Naive thymus-derived CD4-positive, alpha-beta T cell (primary cell): ENCODE measurements at regions of chr9 and their contacts with region 1.

Region 1: GRCh38 chr9:20558566-20559016 is 63.7 kb downstream of the MLLT3 start:
- DNase-seq: peak in 1 of 9 donors; percentile 23
- ATAC-seq: no peak
- H3K4me3 ChIP-seq: no peak overlapping the region
- H3K4me3 Mint-ChIP-seq: peak overlapping the region in 8 of 10 donors; percentile 13 to 69 (median 38)
- H3K27ac ChIP-seq: no peak overlapping the region
- H3K27ac Mint-ChIP-seq: peak overlapping the region in 6 of 9 donors; percentile 54 to 81 (median 66)
- H3K4me1 ChIP-seq: peaks cover 22 to 50% of the 10 kb centered on the region in 2 donors
- H3K4me1 Mint-ChIP-seq: peaks cover 51 to 95% (median 92%) of the 10 kb centered on the region in 7 donors
- H3K27me3 ChIP-seq: no peaks in the 10 kb centered on the region
- H3K27me3 Mint-ChIP-seq: no peaks in the 10 kb centered on the region

Region 2: GRCh38 chr9:20524776-20525175 is 33.8 kb before region 1 on chr9:
- CTCF ChIA-PET with region 1: interaction called, 5 read pairs
- POLR2A ChIA-PET with region 1: no interaction called
- intact Hi-C with region 1: loop called in 1 of 2 experiments (anchors 5 kb)
- DNase-seq: no peak
- ATAC-seq: no peak
- H3K4me3 ChIP-seq: no peak overlapping the region
- H3K4me3 Mint-ChIP-seq: peak overlapping the region in 4 of 10 donors; percentile 11 to 49 (median 33)
- H3K27ac ChIP-seq: no peak overlapping the region
- H3K27ac Mint-ChIP-seq: peak overlapping the region in 3 of 9 donors; percentile 36 to 63 (median 62)
- H3K4me1 ChIP-seq: peaks cover 0 to 38% of the 10 kb centered on the region in 2 donors
- H3K4me1 Mint-ChIP-seq: peaks cover 54 to 100% (median 93%) of the 10 kb centered on the region in 7 donors
- H3K27me3 ChIP-seq: no peaks in the 10 kb centered on the region
- H3K27me3 Mint-ChIP-seq: no peaks in the 10 kb centered on the region

Region 3: GRCh38 chr9:20544953-20545622 is 13.5 kb before region 1 on chr9:
- CTCF ChIA-PET with region 1: interaction called, 4 read pairs
- POLR2A ChIA-PET with region 1: no interaction called
- intact Hi-C with region 1: loop called in 1 of 2 experiments (anchors 2 kb)
- DNase-seq: no peak
- ATAC-seq: no peak
- H3K4me3 ChIP-seq: no peak overlapping the region
- H3K4me3 Mint-ChIP-seq: peak overlapping the region in 1 of 10 donors; percentile 4
- H3K27ac ChIP-seq: no peak overlapping the region
- H3K27ac Mint-ChIP-seq: peak overlapping the region in 1 of 9 donors; percentile 49
- H3K4me1 ChIP-seq: peaks cover 0 to 7% of the 10 kb centered on the region in 2 donors
- H3K4me1 Mint-ChIP-seq: peaks cover 28 to 76% (median 61%) of the 10 kb centered on the region in 7 donors
- H3K27me3 ChIP-seq: no peaks in the 10 kb centered on the region
- H3K27me3 Mint-ChIP-seq: no peaks in the 10 kb centered on the region

Region 4: GRCh38 chr9:20593551-20593950 is 35.0 kb after region 1 on chr9:
- CTCF ChIA-PET with region 1: no interaction called
- POLR2A ChIA-PET with region 1: no interaction called
- intact Hi-C with region 1: no loop called
- DNase-seq: no peak
- ATAC-seq: no peak
- H3K4me3 ChIP-seq: no peak overlapping the region
- H3K4me3 Mint-ChIP-seq: no peak overlapping the region
- H3K27ac ChIP-seq: no peak overlapping the region
- H3K27ac Mint-ChIP-seq: peak overlapping the region in 2 of 9 donors; percentile 38 to 51
- H3K4me1 ChIP-seq: peaks cover 4 to 8% of the 10 kb centered on the region in 2 donors
- H3K4me1 Mint-ChIP-seq: peaks cover 39 to 80% (median 72%) of the 10 kb centered on the region in 7 donors
- H3K27me3 ChIP-seq: no peaks in the 10 kb centered on the region
- H3K27me3 Mint-ChIP-seq: no peaks in the 10 kb centered on the region